OCI-LY7 (cell line): ENCODE measurements at regions of chr9 and their contacts with region 1.

Region 1: DNA sequence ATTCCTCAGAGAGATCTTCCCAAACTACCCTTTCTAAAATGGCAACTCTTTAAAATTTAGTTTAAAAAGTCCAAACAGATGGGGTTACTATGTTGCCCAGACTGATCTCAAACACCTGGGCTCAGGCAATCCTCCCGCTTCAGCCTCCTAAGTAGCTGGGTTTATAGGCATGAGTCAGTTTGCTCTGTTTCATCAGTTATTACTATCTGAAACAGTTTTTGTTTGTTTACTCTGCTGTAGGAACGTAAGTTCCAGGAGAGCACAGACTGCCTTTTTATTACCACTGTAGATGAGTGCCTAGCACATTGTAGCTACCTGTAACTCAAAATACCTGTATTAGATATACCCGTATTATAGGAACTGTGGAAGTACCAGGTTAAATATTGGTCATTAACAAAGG is 89.4 kb downstream of the UHRF2 start:
- DNase-seq: no peak
- H3K4me3 ChIP-seq: no peak overlapping the region
- H3K27ac ChIP-seq: no peak overlapping the region
- H3K4me1 ChIP-seq: no peaks in the 10 kb centered on the region
- CTCF ChIP-seq: no peak

Region 2: DNA sequence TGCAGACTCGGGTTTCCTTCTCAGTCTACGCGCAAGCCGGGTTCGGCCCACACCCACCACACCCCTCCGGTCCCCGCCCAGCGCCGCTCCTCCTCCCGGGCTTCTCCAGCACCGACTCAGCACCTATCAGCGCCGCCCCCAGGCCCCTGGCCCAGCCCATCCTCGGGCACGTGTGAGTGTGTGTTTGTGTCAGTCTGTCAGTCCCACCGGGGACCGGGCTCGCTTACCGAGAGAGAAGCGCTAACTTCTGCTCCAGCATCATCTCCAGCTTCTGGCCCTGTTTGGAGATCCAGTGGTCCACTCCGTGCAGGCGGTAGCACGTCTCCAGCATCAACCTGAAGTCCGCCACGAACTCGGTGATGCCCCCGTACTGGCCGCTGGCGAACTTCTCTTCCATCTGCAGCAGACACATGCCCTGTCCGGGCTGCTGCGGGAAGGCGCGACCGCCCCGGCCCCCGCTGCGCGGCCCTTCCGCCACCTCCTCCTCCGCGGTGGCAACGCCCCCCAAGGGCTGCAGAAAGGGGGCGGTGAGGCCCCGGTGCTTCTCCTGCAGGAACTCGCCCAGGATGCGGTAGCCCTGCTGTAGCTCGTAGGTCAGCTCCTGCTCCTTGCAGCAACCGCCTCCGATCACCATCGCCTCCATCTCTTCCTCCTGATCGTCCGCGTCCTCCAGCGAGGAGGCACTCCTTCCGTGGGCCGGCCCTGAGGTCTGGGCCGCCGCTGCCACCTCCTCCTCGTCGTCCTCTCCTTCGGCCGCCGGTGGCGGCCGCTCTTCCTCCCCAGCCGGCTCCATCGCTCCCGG is 495.2 kb before region 1 on chr9:
- CTCF ChIA-PET with region 1: no interaction called
- POLR2A ChIA-PET with region 1: no interaction called
- intact Hi-C with region 1: no loop called
- DNase-seq: peak; percentile 86
- H3K4me3 ChIP-seq: peak overlapping the region; percentile 94
- H3K27ac ChIP-seq: peak overlapping the region; percentile 70
- H3K4me1 ChIP-seq: peaks cover 47% of the 10 kb centered on the region
- CTCF ChIP-seq: no peak

Region 3: GRCh38 chr9:6488395-6488794 is 14.0 kb before region 1 on chr9:
- CTCF ChIA-PET with region 1: no interaction called
- POLR2A ChIA-PET with region 1: no interaction called
- intact Hi-C with region 1: loop called (anchors 2 kb)
- DNase-seq: peak; percentile 13
- H3K4me3 ChIP-seq: no peak overlapping the region
- H3K27ac ChIP-seq: no peak overlapping the region
- H3K4me1 ChIP-seq: no peaks in the 10 kb centered on the region
- CTCF ChIP-seq: no peak; the same call in 1 of the 2 replicates